RWPE1 (cell line): ENCODE measurements at regions of chr9 and their contacts with region 1.

Region 1: GRCh38 chr9:14353222-14354056 is 39.5 kb upstream of the NFIB start:
- DNase-seq: peak; percentile 79
- H3K27ac ChIP-seq: no peak overlapping the region
- CTCF ChIP-seq: peak; percentile 93

Region 2: DNA sequence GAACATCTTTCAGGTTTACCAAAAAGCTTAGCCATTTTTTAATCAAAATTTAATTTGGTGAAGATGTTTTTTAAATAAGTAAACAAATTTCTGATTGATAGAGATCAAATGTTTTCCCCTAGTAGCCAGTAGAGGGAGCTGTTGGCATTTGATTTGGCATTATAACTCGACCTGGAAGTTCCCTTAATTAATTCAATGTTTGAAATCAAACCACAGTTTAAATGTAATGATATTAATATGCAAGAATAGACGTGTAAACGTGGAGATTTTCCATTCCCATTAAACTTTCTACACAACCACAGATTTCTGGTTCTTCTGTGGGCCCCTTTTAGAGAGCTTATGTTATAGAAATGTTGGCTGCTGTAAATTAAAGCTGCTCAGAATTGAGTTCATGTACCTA is 925.9 kb before region 1 on chr9:
- CTCF ChIA-PET with region 1: interaction called, 23 read pairs
- POLR2A ChIA-PET with region 1: no interaction called
- DNase-seq: peak; percentile 34
- H3K27ac ChIP-seq: no peak overlapping the region
- CTCF ChIP-seq: peak; percentile 71

Region 3: DNA sequence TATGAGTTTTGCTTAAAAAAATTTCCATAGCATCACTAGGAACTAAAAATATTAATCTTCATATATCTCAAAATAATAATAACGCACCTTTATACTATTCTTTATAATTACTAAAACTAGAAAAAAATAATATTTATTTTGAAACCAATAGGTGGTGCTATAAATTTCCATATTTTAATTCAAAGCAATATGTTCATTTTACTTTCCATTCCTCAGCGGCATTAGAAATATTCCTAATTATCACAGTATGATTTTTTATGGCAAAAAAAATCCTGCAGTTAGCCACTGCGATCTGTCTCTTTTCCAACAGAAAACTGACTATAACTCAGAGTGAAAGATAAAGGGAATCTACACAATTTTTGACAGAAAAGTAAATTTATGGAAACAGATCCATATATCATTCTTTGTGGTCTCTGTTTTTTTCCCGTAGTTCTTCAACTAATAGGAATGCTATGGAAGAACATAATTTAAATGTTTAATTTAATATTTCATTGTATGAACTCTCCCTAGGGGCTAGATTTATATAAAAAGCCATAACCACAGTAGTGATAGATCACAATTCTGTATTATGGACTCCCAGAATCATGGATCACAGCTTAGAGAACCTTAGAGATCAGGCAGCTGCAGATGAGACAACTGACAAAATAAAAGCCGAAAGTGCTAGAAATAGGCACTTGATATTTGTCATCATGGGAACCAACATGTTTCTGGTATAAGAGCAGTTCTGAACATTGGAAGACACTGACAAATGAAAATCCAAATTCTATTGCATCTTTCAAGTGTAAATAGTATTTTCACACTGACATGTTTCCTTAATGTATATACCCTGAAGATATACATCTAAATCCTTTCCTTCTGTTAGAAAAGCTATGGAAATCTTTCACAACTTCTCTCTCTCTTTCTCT is 906.2 kb before region 1 on chr9:
- CTCF ChIA-PET with region 1: interaction called, 18 read pairs
- POLR2A ChIA-PET with region 1: no interaction called
- DNase-seq: no peak
- H3K27ac ChIP-seq: no peak overlapping the region
- CTCF ChIP-seq: no peak; the same call in 1 of the 2 replicates